Sciatic nerve (tissue), 2 donors: ENCODE measurements at regions of chr9 and their contacts with region 1.

Region 1: DNA sequence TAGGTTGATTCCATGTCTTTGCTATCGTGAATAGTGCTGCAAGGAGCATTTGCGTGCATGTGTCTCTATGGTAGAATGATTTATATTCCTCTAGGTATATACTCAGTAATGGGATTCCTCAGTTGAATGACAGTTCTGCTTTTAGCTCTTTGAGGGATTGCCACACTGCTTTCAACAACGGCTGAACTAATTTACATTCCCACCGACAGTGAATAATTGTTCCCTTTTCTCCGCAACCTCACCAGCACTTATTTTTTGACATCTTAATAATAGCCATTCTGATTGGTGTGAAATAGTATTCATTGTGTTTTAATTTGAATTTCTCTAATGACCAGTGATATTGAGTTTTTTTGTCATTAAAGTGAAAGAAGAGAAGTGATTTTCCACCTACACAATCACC is 18.5 kb downstream of the IFNA5 start:
- DNase-seq: no peak
- ATAC-seq: no peak

Region 2: DNA sequence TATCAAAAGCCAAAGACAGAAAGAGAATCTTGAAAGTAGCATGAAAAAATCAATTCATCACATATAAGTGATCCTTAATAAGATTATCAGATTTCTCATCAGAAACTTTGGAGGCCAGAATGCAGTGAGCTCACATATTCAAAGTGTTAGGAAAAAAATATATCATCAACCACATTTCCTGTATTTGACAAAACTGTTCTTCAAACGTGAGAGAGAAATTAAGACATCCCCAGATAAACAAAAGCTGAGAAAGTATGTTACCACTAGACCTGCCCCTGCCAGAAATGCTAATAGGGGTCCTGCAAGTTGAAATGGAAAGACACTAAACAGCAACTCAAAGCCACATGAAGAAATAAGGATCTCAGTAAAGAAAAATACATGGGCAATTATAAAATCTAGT is 285.1 kb before region 1 on chr9:
- intact Hi-C with region 1: no loop called
- DNase-seq: no peak
- ATAC-seq: no peak

Region 3: GRCh38 chr9:21535396-21535795 is 248.7 kb after region 1 on chr9:
- intact Hi-C with region 1: loop called (anchors 5 kb)
- DNase-seq: no peak
- ATAC-seq: no peak